ENCODE measurements at regions of chr1 and their contacts with region 1.

Region 1: GRCh38 chr1:148334339-148335130 is 148.6 kb downstream of the PPIAL4G start:
- DNase-seq: peak; percentile 81
- H3K4me3 Mint-ChIP-seq: peak overlapping the region; percentile 90
- H3K27ac Mint-ChIP-seq: peak overlapping the region; percentile 97
- H3K4me1 Mint-ChIP-seq: peaks cover 36% of the 10 kb centered on the region
- H3K27me3 Mint-ChIP-seq: peaks cover 47% of the 10 kb centered on the region

Region 2: DNA sequence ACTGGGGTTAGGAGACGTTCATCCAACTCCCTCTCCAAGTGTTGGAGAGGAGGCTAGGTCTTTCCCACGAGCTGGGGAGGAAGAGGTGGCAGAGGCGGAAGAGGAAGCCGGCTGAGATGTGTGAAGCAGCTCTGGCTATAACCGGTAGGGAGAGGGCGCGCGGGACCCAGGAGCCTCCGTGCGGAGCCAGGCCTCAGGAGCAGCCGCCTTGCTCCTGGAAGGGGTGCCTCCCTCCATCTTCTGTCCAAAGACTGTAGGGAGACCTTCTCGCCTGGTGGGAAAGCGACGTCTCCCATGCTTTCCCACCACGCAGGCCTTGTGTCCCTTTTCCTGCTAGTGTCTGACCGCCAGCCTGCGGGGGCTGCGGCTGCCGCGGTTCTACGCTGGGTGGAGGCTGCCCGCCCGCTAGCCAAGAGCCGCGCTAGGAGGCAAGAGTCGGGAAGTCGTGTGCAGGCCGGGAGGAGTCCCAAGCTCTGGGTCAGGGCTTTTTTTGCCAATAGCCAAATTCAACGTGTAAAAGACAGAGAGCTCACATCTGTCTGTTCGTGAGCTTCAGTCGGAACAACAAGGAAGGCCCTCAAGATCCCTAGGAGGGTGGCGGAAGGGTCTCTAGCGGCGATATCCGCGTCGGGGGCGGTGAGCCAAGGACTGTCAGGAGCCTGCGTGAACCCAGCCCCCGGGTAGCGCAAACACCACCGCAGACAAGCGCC is 174.0 kb before region 1 on chr1:
- CTCF ChIA-PET with region 1: no interaction called
- POLR2A ChIA-PET with region 1: no interaction called
- DNase-seq: no peak
- H3K4me3 Mint-ChIP-seq: no peak overlapping the region
- H3K27ac Mint-ChIP-seq: no peak overlapping the region
- H3K4me1 Mint-ChIP-seq: peaks cover 2% of the 10 kb centered on the region
- H3K27me3 Mint-ChIP-seq: peaks cover 29% of the 10 kb centered on the region

Region 3: GRCh38 chr1:148263128-148263905 is 71.2 kb before region 1 on chr1:
- CTCF ChIA-PET with region 1: interaction called, 4 read pairs
- POLR2A ChIA-PET with region 1: interaction called, 123 read pairs
- DNase-seq: peak; percentile 72
- H3K4me3 Mint-ChIP-seq: peak overlapping the region; percentile 84
- H3K27ac Mint-ChIP-seq: peak overlapping the region; percentile 83
- H3K4me1 Mint-ChIP-seq: peaks cover 16% of the 10 kb centered on the region
- H3K27me3 Mint-ChIP-seq: peaks cover 27% of the 10 kb centered on the region

Region 4: GRCh38 chr1:148287311-148287710 is 47.2 kb before region 1 on chr1:
- CTCF ChIA-PET with region 1: no interaction called
- POLR2A ChIA-PET with region 1: no interaction called
- DNase-seq: no peak
- H3K4me3 Mint-ChIP-seq: no peak overlapping the region
- H3K27ac Mint-ChIP-seq: no peak overlapping the region
- H3K4me1 Mint-ChIP-seq: no peaks in the 10 kb centered on the region
- H3K27me3 Mint-ChIP-seq: peaks cover 14% of the 10 kb centered on the region

Region 5: GRCh38 chr1:148307583-148308190 is 26.8 kb before region 1 on chr1:
- CTCF ChIA-PET with region 1: no interaction called
- POLR2A ChIA-PET with region 1: interaction called, 18 read pairs
- DNase-seq: no peak
- H3K4me3 Mint-ChIP-seq: no peak overlapping the region
- H3K27ac Mint-ChIP-seq: no peak overlapping the region
- H3K4me1 Mint-ChIP-seq: peaks cover 28% of the 10 kb centered on the region
- H3K27me3 Mint-ChIP-seq: peaks cover 69% of the 10 kb centered on the region

Region 6: GRCh38 chr1:148347781-148348180 is 13.2 kb after region 1 on chr1:
- CTCF ChIA-PET with region 1: interaction called, 5 read pairs
- POLR2A ChIA-PET with region 1: interaction called, 22 read pairs
- DNase-seq: no peak
- H3K4me3 Mint-ChIP-seq: no peak overlapping the region
- H3K27ac Mint-ChIP-seq: no peak overlapping the region
- H3K4me1 Mint-ChIP-seq: peaks cover 3% of the 10 kb centered on the region
- H3K27me3 Mint-ChIP-seq: peaks cover 62% of the 10 kb centered on the region

Region 7: GRCh38 chr1:148362626-148363438 is 28.3 kb after region 1 on chr1:
- CTCF ChIA-PET with region 1: interaction called, 5 read pairs
- POLR2A ChIA-PET with region 1: interaction called, 19 read pairs
- DNase-seq: peak; percentile 39
- H3K4me3 Mint-ChIP-seq: peak overlapping the region; percentile 75
- H3K27ac Mint-ChIP-seq: no peak overlapping the region
- H3K4me1 Mint-ChIP-seq: peaks cover 49% of the 10 kb centered on the region
- H3K27me3 Mint-ChIP-seq: peaks cover 51% of the 10 kb centered on the region

Region 8: GRCh38 chr1:148388260-148389027 is 53.9 kb after region 1 on chr1:
- CTCF ChIA-PET with region 1: interaction called, 3 read pairs
- POLR2A ChIA-PET with region 1: interaction called, 32 read pairs
- DNase-seq: peak; percentile 91
- H3K4me3 Mint-ChIP-seq: peak overlapping the region; percentile 86
- H3K27ac Mint-ChIP-seq: peak overlapping the region; percentile 95
- H3K4me1 Mint-ChIP-seq: peaks cover 38% of the 10 kb centered on the region
- H3K27me3 Mint-ChIP-seq: no peaks in the 10 kb centered on the region

Measured in activated CD4-positive, alpha-beta memory T cell treated with anti-CD3 and anti-CD28 coated beads, Interleukin-2, amount 10 ng/mL, durations not matched to agents 7 days and 5 days (primary cell).